Activated T-helper 2 cell treated with anti-CD3 and anti-CD28 coated beads, Interferon-gamma antibody, Interleukin-2, Interleukin-4, amounts not matched to agents 10 μg/mL and 5 μg/mL and 100 μg/mL, durations not matched to agents 14 hours and 24 hours and 36 hours (primary cell): ENCODE measurements at regions of chr19 and their contacts with region 1.

Region 1: DNA sequence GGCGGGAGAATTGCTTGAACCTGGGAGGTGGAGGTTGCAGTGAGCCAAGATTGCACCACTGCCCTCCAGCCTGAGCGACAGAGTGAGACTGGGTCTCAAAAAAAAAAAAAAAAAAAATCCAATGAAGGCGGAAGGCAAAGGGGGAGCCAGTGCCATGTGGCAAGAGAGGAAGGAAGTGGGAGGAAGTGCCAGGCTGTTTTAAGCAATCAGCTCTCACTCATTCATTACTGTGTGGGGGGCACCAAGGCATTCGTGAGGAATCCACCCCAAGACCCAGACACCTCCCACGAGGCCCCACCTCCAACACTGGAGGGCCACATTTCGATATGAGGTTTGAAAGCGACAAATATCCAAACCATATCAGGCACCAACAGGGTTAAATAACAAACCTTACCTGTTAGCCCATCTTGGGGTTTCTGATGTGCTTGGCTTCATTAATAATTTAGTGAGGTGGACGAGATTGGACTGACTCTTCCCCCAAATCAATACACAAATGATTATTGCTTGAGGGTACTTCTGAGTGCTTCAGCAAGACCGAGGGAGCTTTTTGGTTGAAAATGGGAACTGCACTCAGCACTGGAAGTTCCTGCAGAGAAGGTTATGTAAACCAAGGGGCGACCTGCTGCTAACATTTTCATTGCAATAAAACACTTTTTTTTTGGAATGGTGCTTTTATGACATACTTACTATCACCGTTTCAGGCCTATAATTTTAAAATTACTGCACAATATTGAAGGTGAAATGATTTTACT is 7.5 kb upstream of the LRP3 start:
- DNase-seq: no peak
- H3K4me3 Mint-ChIP-seq: no peak overlapping the region
- H3K27ac Mint-ChIP-seq: no peak overlapping the region
- H3K4me1 Mint-ChIP-seq: no peaks in the 10 kb centered on the region
- H3K27me3 Mint-ChIP-seq: peaks cover 9% of the 10 kb centered on the region

Region 2: GRCh38 chr19:33143897-33144405 is 42.7 kb before region 1 on chr19:
- intact Hi-C with region 1: loop called (anchors 1 kb)
- DNase-seq: peak; percentile 51
- H3K4me3 Mint-ChIP-seq: no peak overlapping the region
- H3K27ac Mint-ChIP-seq: no peak overlapping the region
- H3K4me1 Mint-ChIP-seq: peaks cover 5% of the 10 kb centered on the region
- H3K27me3 Mint-ChIP-seq: peaks cover 7% of the 10 kb centered on the region

Region 3: GRCh38 chr19:33208904-33209849 is 22.6 kb after region 1 on chr19:
- intact Hi-C with region 1: no loop called
- DNase-seq: no peak
- H3K4me3 Mint-ChIP-seq: no peak overlapping the region
- H3K27ac Mint-ChIP-seq: no peak overlapping the region
- H3K4me1 Mint-ChIP-seq: no peaks in the 10 kb centered on the region
- H3K27me3 Mint-ChIP-seq: no peaks in the 10 kb centered on the region

Region 4: DNA sequence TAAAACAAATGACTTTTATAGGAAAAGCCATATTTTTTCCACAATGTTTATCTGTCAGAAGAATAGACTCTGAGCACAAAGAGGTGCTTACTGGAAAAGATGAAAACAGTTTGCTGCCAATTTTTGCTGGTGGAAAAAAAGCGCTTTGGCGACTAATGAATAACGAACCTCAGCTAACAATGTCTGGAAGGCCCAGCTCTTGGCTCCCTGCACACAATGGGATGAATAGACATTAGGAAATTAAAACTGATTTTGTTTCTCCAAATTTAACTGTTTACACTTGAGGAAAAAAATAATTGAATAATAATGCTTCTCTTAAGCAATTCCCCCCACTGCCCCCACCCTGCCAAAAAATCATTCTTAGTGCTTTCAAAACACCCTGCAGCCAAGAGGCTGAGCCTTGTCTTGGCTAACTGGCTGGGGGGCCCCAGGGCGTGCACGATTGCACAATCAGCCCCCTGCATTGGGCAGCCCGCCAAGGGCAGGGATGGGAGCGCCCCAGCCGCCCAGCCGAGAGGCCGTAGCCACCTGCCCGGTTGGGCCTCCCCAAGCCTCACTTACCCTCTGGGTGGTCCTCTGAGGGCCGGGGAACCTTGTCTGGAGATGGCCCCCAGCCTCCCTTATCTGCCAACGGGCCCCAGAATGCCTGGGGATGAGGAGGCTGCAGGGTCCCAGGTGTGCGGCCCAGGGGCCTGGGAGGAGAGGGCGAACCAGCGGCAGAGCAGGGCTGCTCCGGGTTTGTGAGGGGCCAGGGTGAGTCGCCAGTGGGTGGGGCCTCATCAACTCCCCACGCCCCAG is 203.7 kb after region 1 on chr19:
- intact Hi-C with region 1: no loop called
- DNase-seq: no peak
- H3K4me3 Mint-ChIP-seq: no peak overlapping the region
- H3K27ac Mint-ChIP-seq: no peak overlapping the region
- H3K4me1 Mint-ChIP-seq: no peaks in the 10 kb centered on the region
- H3K27me3 Mint-ChIP-seq: no peaks in the 10 kb centered on the region